ENCODE measurements at regions of chr19 and their contacts with region 1.

Region 1: DNA sequence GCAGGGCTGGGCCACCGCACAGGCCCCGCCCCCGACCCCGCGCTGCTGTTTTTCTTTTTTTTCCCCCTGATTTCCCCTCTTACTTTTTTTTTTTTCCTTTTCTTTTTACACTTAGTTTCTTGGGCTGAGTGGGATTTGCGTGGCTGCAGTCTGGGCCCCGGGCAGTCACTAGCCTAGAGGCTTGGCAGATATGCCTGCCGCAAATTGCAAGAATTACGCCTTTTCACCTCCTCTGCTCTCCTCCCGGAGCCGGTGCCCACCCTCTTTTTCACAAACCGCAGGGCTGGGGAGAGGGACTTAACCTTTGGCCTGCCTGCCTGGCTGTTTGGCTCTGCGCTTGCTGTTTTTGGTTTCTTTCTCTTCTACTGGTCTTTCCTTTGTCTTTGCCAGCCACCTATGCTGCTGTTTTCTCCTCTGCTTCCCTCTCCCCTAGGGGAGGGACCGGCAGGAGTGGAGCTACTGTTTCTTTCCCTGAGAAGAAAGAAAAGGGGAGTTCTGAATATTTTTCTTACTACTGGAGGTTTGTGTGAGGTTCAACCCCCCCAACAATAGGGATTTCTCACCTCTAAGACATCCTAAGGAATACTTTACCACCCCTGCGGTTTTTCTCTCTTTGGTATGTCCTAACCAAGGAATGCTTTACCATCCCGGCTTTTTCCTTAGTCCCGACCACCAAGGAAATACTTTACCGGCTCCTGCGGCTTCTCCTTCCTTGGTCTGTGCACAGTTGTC is 11.0 kb downstream of the ZNF552 start:
- DNase-seq: peak in 1 of 2 experiments; percentile 41
- H3K4me3 ChIP-seq: 0 out of 2 replicates have a peak overlapping the region, but pooled peaks have one; percentile 16
- H3K4me3 Mint-ChIP-seq: peak overlapping the region; percentile 66
- H3K27ac Mint-ChIP-seq: peak overlapping the region; percentile 85
- H3K4me1 ChIP-seq: peaks cover 18% of the 10 kb centered on the region
- H3K4me1 Mint-ChIP-seq: peaks cover 19% of the 10 kb centered on the region
- H3K27me3 ChIP-seq: no peaks in the 10 kb centered on the region
- H3K27me3 Mint-ChIP-seq: no peaks in the 10 kb centered on the region
- CTCF ChIP-seq: no peak

Region 2: DNA sequence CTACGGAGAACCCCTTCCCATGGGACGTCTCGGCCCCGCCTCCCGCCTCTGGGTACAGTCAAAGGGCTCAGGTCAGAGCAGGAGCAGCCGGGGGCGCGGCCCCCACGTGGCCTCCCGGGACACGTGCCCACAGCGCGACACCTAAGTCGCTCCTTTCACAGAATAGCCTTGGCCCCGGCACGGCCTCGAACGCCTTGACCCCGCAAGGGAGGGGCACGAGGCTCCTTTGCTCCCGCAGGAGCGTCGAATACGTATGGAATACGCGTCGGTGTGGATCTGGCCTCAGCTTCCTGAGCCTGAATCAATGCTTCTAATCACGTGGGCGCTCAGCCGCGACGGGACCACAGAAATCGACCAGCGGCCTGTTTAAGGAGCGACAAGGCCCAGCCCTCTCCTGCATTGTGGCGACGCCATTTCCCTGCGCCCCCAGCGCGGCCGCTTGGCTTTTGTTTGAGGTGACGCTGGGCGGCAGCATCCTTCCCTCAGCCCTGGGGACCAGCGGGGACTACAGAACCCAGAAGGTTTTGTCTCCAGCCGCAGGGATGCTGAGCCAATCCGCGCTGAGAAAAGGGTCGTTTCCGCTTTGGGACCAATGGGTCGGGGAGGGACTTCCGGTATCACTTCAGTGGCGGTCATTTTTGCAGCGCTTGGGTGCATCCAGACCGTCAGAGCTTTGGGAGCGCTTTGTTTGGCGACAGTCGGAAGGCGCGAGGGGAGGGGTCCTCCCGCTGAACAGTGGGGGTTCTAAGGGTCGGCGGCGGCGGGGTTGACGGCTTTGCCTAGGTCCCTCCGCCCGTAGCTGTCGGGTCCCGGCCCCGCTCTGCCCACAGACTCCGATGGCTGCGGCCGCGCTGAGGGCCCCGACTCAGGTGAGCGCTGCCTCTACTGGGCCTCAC is 220.0 kb before region 1 on chr19 and contains the start of gene ZIK1:
- CTCF ChIA-PET with region 1: no interaction called
- POLR2A ChIA-PET with region 1: no interaction called
- intact Hi-C with region 1: no loop called
- DNase-seq: no peak
- H3K4me3 ChIP-seq: no peak within 1 kb of the TSS
- H3K4me3 Mint-ChIP-seq: no peak within 1 kb of the TSS
- H3K27ac Mint-ChIP-seq: no peak within 1 kb of the TSS
- H3K4me1 ChIP-seq: no peaks in the 10 kb centered on the region
- H3K4me1 Mint-ChIP-seq: no peaks in the 10 kb centered on the region
- H3K27me3 ChIP-seq: no peaks in the 10 kb centered on the region
- H3K27me3 Mint-ChIP-seq: no peaks in the 10 kb centered on the region
- CTCF ChIP-seq: no peak
- total RNA-seq, gene ZIK1: not detected in 2 replicates

Region 3: GRCh38 chr19:57599761-57600383 is 203.9 kb before region 1 on chr19 and contains the start of gene ZNF530:
- CTCF ChIA-PET with region 1: no interaction called
- POLR2A ChIA-PET with region 1: no interaction called
- intact Hi-C with region 1: no loop called
- DNase-seq: peak; percentile 88 to 92
- H3K4me3 ChIP-seq: peak within 1 kb of the TSS; percentile 83
- H3K4me3 Mint-ChIP-seq: peak within 1 kb of the TSS; percentile 77
- H3K27ac Mint-ChIP-seq: peak within 1 kb of the TSS; percentile 19
- H3K4me1 ChIP-seq: no peaks in the 10 kb centered on the region; the same call in 1 of the 2 replicates
- H3K4me1 Mint-ChIP-seq: no peaks in the 10 kb centered on the region
- H3K27me3 ChIP-seq: no peaks in the 10 kb centered on the region
- H3K27me3 Mint-ChIP-seq: peaks cover 4% of the 10 kb centered on the region
- CTCF ChIP-seq: peak in 1 of 2 experiments; percentile 1
- total RNA-seq, gene ZNF530: 8.6 and 8.8 TPM in 2 replicates

Region 4: GRCh38 chr19:57786291-57786690 is 17.5 kb before region 1 on chr19:
- CTCF ChIA-PET with region 1: no interaction called
- POLR2A ChIA-PET with region 1: interaction called, 15 read pairs
- intact Hi-C with region 1: no loop called
- DNase-seq: no peak
- H3K4me3 ChIP-seq: no peak overlapping the region
- H3K4me3 Mint-ChIP-seq: no peak overlapping the region
- H3K27ac Mint-ChIP-seq: no peak overlapping the region
- H3K4me1 ChIP-seq: no peaks in the 10 kb centered on the region
- H3K4me1 Mint-ChIP-seq: no peaks in the 10 kb centered on the region
- H3K27me3 ChIP-seq: no peaks in the 10 kb centered on the region
- H3K27me3 Mint-ChIP-seq: no peaks in the 10 kb centered on the region
- CTCF ChIP-seq: no peak

Measured in Caco-2 (cell line).